MCF 10A (cell line): ENCODE measurements at regions of chr5 and their contacts with region 1.

Region 1: DNA sequence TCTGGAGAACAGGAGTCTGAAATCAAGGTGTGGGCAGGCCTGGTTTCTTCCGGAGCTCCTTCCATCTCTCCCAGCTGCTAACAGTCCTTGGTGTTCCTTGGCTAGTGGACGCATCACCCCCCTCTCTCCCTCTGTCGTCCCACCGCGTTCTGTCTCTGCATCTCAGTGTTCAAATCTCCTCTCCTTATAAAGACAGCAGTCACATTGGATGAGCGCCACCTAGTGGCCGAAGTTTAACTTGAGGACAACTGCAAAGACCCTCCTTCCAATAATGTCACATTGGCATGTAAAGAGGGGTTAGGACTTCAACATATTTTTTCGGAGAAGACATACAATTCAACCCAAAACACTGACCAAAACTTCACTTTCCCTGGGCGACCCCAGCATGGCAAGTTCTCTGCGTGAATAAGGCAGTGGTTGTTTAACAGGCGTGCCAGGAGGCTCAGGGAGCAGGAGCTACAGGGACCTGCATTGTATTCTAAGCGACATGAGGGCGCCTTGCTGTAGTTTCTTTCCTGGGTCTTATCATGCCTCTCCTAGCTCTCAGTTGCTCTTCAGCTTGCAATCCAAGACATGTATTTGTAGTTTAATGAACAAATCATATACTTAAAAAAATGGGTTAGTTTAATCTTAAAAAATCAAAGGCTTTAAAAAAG is 27.9 kb upstream of the BASP1 start:
- DNase-seq: peak; percentile 83
- H3K4me3 Mint-ChIP-seq: no peak overlapping the region
- H3K27ac Mint-ChIP-seq: no peak overlapping the region
- H3K4me1 Mint-ChIP-seq: peaks cover 29% of the 10 kb centered on the region
- H3K27me3 Mint-ChIP-seq: no peaks in the 10 kb centered on the region
- CTCF ChIP-seq: peak; percentile 87

Region 2: DNA sequence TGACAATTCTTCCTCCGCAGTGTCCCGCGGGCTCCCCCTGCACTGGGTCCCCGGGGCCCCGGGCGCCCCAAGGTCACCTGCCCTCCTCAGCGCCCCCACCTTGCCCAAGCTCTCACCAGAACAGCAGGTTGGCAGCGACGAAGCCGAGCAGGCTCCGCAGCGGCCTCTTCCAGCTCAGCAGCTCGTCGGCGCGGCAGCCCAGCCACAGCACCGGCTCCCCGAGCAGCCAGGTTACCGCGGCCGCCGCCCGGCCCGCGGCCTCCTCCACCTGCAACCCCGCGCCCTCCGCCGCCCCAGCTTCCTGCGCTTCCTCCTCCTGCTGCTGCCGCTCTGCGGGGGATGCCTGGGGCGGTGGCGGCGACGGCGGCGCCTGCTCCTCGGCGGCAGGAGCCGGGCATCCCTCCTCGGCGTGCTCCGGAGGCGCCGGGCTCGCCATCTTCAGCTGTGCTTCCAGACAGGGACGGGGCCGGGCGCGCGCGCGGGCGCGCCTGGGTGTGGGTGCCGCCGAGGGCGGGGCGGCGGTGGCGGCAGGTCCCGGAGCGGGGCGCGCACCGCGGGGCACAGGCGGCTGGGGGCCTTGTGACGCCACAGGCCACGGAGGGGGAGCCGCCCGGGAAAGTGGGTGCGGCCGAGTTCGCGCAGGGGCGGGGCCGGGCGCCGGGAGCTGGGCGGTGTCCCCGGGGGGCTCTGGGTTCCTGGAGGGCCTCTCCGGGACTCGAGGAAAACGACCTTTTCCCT is 572.8 kb before region 1 on chr5 and contains the start of gene RETREG1:
- CTCF ChIA-PET with region 1: no interaction called
- POLR2A ChIA-PET with region 1: no interaction called
- intact Hi-C with region 1: loop called (anchors 2 kb)
- DNase-seq: peak; percentile 23
- H3K4me3 Mint-ChIP-seq: no peak within 1 kb of the TSS
- H3K27ac Mint-ChIP-seq: no peak within 1 kb of the TSS
- H3K4me1 Mint-ChIP-seq: peaks cover 8% of the 10 kb centered on the region
- H3K27me3 Mint-ChIP-seq: no peaks in the 10 kb centered on the region
- CTCF ChIP-seq: no peak
- total RNA-seq, gene RETREG1: 4.9 and 5.3 TPM in 2 replicates

Region 3: DNA sequence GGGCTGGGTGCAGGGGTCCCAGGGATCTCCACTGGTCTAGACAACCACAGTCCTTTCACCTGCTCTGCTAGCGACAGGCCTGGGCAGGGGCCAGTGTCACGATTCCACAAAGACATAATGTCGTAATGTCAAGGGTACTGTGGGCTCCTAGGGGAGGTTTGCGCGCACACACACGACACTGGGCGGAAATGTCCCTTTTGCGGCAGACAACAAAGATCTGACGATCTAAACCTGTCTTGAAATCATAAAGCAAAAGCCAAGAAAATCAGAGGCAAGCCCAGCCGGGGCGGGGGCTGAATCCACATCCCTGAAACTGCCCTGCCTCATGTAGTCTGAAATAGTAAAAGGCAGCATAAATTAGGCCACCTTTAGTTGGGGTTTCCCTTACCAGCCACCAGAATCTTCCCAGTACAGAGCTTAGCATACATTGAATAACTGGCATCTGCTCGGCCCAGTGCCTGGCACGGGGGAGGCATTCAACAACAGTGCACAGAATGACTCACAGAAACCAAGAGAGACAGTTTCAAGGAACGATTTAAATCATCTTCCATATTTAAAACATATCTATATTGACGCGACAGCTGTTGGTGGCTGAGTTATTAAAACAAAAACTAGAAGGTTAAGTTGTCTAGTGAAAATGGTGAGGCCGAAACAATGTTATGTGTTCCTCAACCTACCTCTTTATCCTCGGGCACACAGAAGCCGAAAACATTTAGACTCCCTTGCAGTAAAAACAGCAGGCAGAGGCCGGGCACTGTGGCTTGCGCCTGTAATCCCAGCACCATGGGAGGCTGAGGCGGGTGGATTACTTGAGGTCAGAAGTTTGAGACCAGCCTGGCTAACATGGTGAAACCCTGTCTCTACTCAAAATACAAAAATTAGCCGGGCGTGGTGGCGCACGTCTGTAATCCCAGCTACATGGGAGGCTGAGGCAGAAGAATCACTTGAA is 404.4 kb before region 1 on chr5:
- CTCF ChIA-PET with region 1: interaction called, 92 read pairs
- POLR2A ChIA-PET with region 1: no interaction called
- intact Hi-C with region 1: no loop called
- DNase-seq: peak; percentile 51
- H3K4me3 Mint-ChIP-seq: no peak overlapping the region
- H3K27ac Mint-ChIP-seq: no peak overlapping the region
- H3K4me1 Mint-ChIP-seq: peaks cover 25% of the 10 kb centered on the region
- H3K27me3 Mint-ChIP-seq: no peaks in the 10 kb centered on the region
- CTCF ChIP-seq: no peak

Region 4: GRCh38 chr5:16842896-16843295 is 346.6 kb before region 1 on chr5:
- CTCF ChIA-PET with region 1: interaction called, 55 read pairs
- POLR2A ChIA-PET with region 1: no interaction called
- intact Hi-C with region 1: no loop called
- DNase-seq: no peak
- H3K4me3 Mint-ChIP-seq: no peak overlapping the region
- H3K27ac Mint-ChIP-seq: no peak overlapping the region
- H3K4me1 Mint-ChIP-seq: no peaks in the 10 kb centered on the region
- H3K27me3 Mint-ChIP-seq: no peaks in the 10 kb centered on the region
- CTCF ChIP-seq: no peak

Region 5: DNA sequence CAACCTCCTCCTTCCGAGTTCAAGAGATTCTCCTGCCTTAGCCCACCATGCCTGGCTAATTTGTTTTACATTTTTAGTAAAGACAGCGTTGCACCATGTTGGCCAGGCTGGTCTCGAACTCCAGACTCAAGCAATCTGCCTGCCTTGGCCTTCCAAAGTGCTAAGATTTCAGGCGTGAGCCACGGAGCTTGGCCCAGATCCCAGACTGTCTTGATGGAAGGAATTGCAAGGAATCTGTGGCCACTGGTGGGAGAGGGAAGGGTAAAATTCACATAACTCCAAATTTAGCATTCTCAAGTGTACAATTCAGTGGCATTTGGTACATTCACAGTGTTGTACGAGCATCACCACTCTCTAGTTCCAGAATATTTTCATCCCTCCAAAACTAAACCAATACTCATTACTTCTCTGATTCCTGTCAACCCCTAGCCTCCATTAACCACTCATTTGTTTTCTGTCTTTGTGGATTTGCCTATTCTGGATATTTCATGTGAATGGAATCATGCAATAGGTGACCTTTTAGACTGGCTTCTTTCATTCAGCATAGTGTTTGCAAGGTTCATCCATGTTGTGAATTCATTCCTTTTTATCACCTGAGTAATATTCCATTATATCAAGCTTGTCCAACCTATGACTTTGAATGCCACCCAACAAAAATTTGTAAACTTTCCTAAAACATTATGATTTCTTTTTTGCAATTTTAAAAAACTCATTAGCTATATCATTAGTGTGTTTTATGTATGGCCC is 244.5 kb before region 1 on chr5:
- CTCF ChIA-PET with region 1: interaction called, 26 read pairs
- POLR2A ChIA-PET with region 1: no interaction called
- intact Hi-C with region 1: no loop called
- DNase-seq: no peak
- H3K4me3 Mint-ChIP-seq: no peak overlapping the region
- H3K27ac Mint-ChIP-seq: no peak overlapping the region
- H3K4me1 Mint-ChIP-seq: peaks cover 5% of the 10 kb centered on the region
- H3K27me3 Mint-ChIP-seq: peaks cover 9% of the 10 kb centered on the region
- CTCF ChIP-seq: no peak

Region 6: DNA sequence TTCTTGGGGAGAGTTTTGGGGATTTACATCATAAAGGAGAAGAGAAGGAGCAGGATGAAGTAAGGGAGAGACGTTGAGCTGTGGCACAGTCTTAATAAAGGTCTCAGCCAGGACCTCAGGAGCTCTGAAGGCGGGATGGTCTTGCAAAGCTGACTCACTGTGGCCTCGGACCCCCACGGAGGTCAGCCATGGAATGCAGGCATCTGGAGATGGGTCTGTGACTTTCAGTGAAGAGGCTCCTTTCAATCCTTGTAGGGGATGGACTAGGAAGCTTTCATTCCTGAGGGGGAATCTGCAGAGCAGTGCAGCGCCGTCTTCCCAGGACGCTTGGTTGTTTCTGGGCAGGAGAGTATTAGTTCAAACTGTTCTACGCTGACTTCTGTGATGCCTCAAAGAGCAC is 37.8 kb before region 1 on chr5:
- CTCF ChIA-PET with region 1: interaction called, 21 read pairs
- POLR2A ChIA-PET with region 1: no interaction called
- intact Hi-C with region 1: no loop called
- DNase-seq: no peak
- H3K4me3 Mint-ChIP-seq: no peak overlapping the region
- H3K27ac Mint-ChIP-seq: no peak overlapping the region
- H3K4me1 Mint-ChIP-seq: peaks cover 17% of the 10 kb centered on the region
- H3K27me3 Mint-ChIP-seq: no peaks in the 10 kb centered on the region
- CTCF ChIP-seq: no peak

Region 7: DNA sequence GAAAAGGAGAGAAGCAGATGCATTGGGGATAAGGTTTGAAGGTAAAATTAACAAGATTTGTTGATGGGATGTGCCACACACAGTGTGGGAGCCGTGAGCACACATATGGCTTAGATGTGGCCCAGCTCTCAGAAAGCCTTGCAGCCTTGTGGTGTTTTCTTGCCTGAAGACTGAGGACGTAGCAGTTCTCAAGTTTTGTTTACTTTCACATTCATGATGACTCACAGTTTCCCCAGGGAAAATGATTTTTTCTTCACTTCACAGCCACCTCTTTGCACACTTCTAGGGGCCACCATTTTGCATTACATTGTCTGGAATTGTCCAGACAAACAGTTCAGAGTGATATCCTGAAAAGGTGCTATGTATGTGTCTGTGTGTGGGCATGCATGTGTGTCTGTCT is 154.2 kb after region 1 on chr5:
- CTCF ChIA-PET with region 1: no interaction called
- POLR2A ChIA-PET with region 1: no interaction called
- intact Hi-C with region 1: no loop called
- DNase-seq: peak; percentile 89
- H3K4me3 Mint-ChIP-seq: no peak overlapping the region
- H3K27ac Mint-ChIP-seq: peak overlapping the region; percentile 78
- H3K4me1 Mint-ChIP-seq: peaks cover 12% of the 10 kb centered on the region
- H3K27me3 Mint-ChIP-seq: no peaks in the 10 kb centered on the region
- CTCF ChIP-seq: no peak